WTC11 (cell line): ENCODE measurements at regions of chr7 and their contacts with region 1.

Region 1: DNA sequence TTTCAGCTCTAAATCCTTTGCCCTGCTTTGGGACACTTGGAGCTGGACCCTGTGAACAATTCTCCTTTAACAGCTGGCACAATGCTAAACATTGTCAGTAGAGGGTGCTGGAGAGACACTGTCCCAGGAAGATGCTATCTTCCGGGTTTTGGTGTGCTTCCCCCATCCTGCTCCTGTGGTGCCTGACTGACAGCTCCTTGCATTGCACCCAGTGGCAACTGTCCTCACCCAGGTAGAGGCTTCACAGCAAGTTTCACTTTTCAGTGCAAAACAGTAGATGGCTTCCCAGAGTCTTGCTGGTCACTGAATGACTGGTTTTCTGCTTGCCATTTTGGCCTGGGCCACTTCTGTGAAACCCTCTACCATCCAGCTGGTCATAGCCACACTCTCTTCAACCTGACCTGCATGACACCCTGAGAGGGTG is 77.3 kb downstream of the CDC14C start:
- DNase-seq: peak; percentile 68
- ATAC-seq: peak; percentile 99
- H3K4me3 Mint-ChIP-seq: no peak overlapping the region
- H3K27ac Mint-ChIP-seq: 0 out of 2 replicates have a peak overlapping the region, but pooled peaks have one; percentile 69
- H3K4me1 Mint-ChIP-seq: peaks cover 14% of the 10 kb centered on the region
- H3K27me3 Mint-ChIP-seq: peaks cover 9% of the 10 kb centered on the region; the same call in 1 of the 2 replicates
- CTCF ChIP-seq: peak; percentile 69

Region 2: DNA sequence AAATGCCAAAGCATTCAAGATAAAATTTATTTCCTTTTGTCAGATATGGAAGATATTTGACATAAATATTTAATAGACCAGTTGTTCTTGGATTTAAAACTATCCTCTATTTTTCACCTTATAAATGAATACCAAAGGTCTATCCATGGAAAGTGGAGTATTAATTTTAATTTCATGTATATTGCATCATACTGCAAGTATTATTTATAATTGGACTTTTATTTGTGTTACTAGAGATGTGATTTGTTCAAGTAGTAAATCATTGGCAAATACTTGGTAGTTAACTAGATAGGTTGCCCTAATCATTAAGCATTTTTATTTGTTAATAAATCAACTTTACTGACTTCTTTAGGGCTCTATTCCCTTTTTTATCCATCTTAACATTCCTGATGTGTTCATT is 20.8 kb after region 1 on chr7:
- CTCF ChIA-PET with region 1: interaction called, 10 read pairs
- POLR2A ChIA-PET with region 1: no interaction called
- DNase-seq: no peak
- ATAC-seq: no peak
- H3K4me3 Mint-ChIP-seq: no peak overlapping the region
- H3K27ac Mint-ChIP-seq: no peak overlapping the region
- H3K4me1 Mint-ChIP-seq: peaks cover 60% of the 10 kb centered on the region
- H3K27me3 Mint-ChIP-seq: no peaks in the 10 kb centered on the region
- CTCF ChIP-seq: no peak

Region 3: GRCh38 chr7:49099587-49100326 is 98.1 kb after region 1 on chr7:
- CTCF ChIA-PET with region 1: interaction called, 13 read pairs
- POLR2A ChIA-PET with region 1: interaction called, 4 read pairs
- DNase-seq: no peak
- ATAC-seq: peak; percentile 76
- H3K4me3 Mint-ChIP-seq: no peak overlapping the region
- H3K27ac Mint-ChIP-seq: peak overlapping the region; percentile 99
- H3K4me1 Mint-ChIP-seq: peaks cover 46% of the 10 kb centered on the region
- H3K27me3 Mint-ChIP-seq: no peaks in the 10 kb centered on the region
- CTCF ChIP-seq: no peak

Region 4: GRCh38 chr7:49166441-49166840 is 164.8 kb after region 1 on chr7:
- CTCF ChIA-PET with region 1: interaction called, 41 read pairs
- POLR2A ChIA-PET with region 1: no interaction called
- DNase-seq: no peak
- ATAC-seq: peak; percentile 75
- H3K4me3 Mint-ChIP-seq: no peak overlapping the region
- H3K27ac Mint-ChIP-seq: no peak overlapping the region
- H3K4me1 Mint-ChIP-seq: peaks cover 7% of the 10 kb centered on the region
- H3K27me3 Mint-ChIP-seq: no peaks in the 10 kb centered on the region
- CTCF ChIP-seq: peak; percentile 23; the same call in 1 of the 2 replicates

Region 5: GRCh38 chr7:49243521-49243920 is 241.9 kb after region 1 on chr7:
- CTCF ChIA-PET with region 1: interaction called, 56 read pairs
- POLR2A ChIA-PET with region 1: no interaction called
- DNase-seq: no peak
- ATAC-seq: 0 out of 2 replicates have a peak, but pooled peaks have one; percentile 10
- H3K4me3 Mint-ChIP-seq: no peak overlapping the region
- H3K27ac Mint-ChIP-seq: peak overlapping the region; percentile 98; the same call in 1 of the 2 replicates
- H3K4me1 Mint-ChIP-seq: peaks cover 75% of the 10 kb centered on the region
- H3K27me3 Mint-ChIP-seq: peaks cover 11% of the 10 kb centered on the region
- CTCF ChIP-seq: peak; percentile 35

Region 6: DNA sequence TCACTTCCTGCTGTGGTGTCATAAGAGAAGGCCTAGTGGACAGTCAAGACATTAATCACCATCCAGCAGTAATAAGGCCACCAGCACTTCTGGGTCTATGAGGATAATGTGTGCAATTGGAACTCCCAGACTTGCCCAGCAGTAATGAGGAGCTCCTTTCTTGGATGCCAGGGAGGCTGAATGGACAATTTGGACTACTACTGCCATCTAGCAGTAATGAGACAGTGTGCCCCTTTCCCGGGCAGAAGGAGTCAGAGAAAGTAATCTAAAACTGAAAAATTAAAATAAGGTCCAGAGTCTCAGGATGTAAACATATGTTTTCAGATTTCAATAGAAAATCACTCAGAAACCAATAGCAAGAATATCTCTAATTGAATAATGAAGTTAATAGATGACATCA is 323.1 kb after region 1 on chr7:
- CTCF ChIA-PET with region 1: interaction called, 10 read pairs
- POLR2A ChIA-PET with region 1: no interaction called
- DNase-seq: no peak
- ATAC-seq: peak; percentile 47
- H3K4me3 Mint-ChIP-seq: no peak overlapping the region
- H3K27ac Mint-ChIP-seq: no peak overlapping the region
- H3K4me1 Mint-ChIP-seq: peaks cover 21% of the 10 kb centered on the region
- H3K27me3 Mint-ChIP-seq: no peaks in the 10 kb centered on the region
- CTCF ChIP-seq: no peak

Region 7: GRCh38 chr7:49791088-49791741 is 789.6 kb after region 1 on chr7:
- CTCF ChIA-PET with region 1: interaction called, 15 read pairs
- POLR2A ChIA-PET with region 1: no interaction called
- DNase-seq: peak; percentile 48
- ATAC-seq: peak; percentile 83
- H3K4me3 Mint-ChIP-seq: no peak overlapping the region
- H3K27ac Mint-ChIP-seq: peak overlapping the region; percentile 9; the same call in 1 of the 2 replicates
- H3K4me1 Mint-ChIP-seq: peaks cover 22% of the 10 kb centered on the region
- H3K27me3 Mint-ChIP-seq: peaks cover 4% of the 10 kb centered on the region; the same call in 1 of the 2 replicates
- CTCF ChIP-seq: no peak